PC-3 (cell line): ENCODE measurements at regions of chr3 and their contacts with region 1.

Region 1: DNA sequence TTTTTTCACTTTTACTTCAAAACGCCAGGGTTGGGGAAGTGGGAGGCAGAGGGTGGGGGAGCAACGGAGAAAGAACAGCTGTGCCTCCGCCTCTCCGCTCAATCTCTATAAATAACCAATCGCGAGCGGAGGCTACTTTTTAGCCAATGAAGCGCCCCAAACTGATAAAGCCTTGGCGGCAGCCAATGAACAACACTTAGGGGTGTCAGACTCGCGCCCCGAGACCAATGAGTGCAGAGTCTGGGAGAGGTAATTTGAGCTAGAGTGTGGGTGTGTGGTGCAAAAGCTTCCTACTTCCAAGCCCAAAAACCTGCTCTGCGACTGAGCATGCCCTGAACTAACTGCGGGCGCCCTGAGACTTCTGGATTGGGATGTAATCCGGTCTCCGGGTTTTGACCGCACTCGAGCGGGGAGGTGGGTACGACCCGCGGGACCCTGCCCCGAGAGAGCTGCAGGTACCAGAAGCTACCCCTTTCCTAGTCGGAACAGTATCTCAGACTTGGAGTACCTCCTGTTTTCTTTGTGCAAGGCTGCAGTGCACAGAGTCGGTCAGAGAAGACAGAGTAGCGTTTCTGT is 800 bp upstream of the RAP2B start:
- DNase-seq: peak; percentile 99
- ATAC-seq: peak; percentile 69
- H3K4me3 ChIP-seq: peak overlapping the region; percentile 95
- H3K27ac ChIP-seq: peak overlapping the region; percentile 94
- H3K4me1 ChIP-seq: peaks cover 31% of the 10 kb centered on the region
- H3K27me3 ChIP-seq: no peaks in the 10 kb centered on the region
- CTCF ChIP-seq: no peak

Region 2: GRCh38 chr3:153043729-153044328 is 117.4 kb before region 1 on chr3:
- CTCF ChIA-PET with region 1: interaction called, 34 read pairs
- POLR2A ChIA-PET with region 1: interaction called, 21 read pairs
- intact Hi-C with region 1: loop called (anchors 1 kb)
- DNase-seq: peak; percentile 60
- ATAC-seq: peak; percentile 30; the same call in 1 of the 2 replicates
- H3K4me3 ChIP-seq: peak overlapping the region; percentile 48
- H3K27ac ChIP-seq: peak overlapping the region; percentile 60
- H3K4me1 ChIP-seq: peaks cover 30% of the 10 kb centered on the region
- H3K27me3 ChIP-seq: no peaks in the 10 kb centered on the region
- CTCF ChIP-seq: no peak

Region 3: GRCh38 chr3:153111016-153111415 is 50.2 kb before region 1 on chr3:
- CTCF ChIA-PET with region 1: no interaction called
- POLR2A ChIA-PET with region 1: no interaction called
- intact Hi-C with region 1: no loop called
- DNase-seq: no peak
- ATAC-seq: no peak
- H3K4me3 ChIP-seq: no peak overlapping the region
- H3K27ac ChIP-seq: no peak overlapping the region
- H3K4me1 ChIP-seq: no peaks in the 10 kb centered on the region
- H3K27me3 ChIP-seq: no peaks in the 10 kb centered on the region
- CTCF ChIP-seq: no peak

Region 4: DNA sequence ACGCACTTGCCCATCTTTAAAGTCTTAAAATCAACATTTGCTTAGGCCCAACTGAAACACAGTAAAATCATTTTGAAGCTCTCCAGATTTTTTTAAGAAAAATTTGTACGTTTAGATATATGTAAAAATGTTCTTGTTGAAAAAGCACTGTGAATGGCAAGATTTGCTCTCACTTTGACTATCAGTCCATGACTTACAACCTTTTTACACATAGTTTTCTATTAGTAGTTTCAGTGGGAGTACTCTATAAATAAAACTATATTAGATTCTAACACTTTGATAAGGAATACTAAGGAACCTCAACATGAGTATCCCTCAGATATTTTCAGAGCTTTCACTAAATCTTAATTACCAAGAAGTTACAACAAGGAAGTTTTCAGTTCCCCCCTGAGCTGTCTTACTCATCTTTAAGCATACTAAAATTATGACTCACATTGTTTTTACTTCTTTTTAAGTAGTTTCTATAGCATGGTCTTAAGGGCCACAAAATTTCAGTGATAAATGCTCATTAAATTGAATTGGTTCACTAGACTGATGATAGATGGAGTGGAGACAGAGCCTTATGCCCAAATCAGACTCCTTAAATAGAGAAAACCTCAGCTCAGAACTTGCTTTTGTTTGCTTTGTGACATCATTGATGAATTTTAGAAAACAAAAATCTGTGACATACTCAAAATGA is 30.8 kb before region 1 on chr3:
- CTCF ChIA-PET with region 1: interaction called, 3 read pairs
- POLR2A ChIA-PET with region 1: interaction called, 13 read pairs
- intact Hi-C with region 1: loop called (anchors 5 kb)
- DNase-seq: peak; percentile 77
- ATAC-seq: peak; percentile 96
- H3K4me3 ChIP-seq: peak overlapping the region; percentile 13; the same call in 1 of the 2 replicates
- H3K27ac ChIP-seq: peak overlapping the region; percentile 68
- H3K4me1 ChIP-seq: peaks cover 18% of the 10 kb centered on the region
- H3K27me3 ChIP-seq: no peaks in the 10 kb centered on the region
- CTCF ChIP-seq: no peak

Region 5: DNA sequence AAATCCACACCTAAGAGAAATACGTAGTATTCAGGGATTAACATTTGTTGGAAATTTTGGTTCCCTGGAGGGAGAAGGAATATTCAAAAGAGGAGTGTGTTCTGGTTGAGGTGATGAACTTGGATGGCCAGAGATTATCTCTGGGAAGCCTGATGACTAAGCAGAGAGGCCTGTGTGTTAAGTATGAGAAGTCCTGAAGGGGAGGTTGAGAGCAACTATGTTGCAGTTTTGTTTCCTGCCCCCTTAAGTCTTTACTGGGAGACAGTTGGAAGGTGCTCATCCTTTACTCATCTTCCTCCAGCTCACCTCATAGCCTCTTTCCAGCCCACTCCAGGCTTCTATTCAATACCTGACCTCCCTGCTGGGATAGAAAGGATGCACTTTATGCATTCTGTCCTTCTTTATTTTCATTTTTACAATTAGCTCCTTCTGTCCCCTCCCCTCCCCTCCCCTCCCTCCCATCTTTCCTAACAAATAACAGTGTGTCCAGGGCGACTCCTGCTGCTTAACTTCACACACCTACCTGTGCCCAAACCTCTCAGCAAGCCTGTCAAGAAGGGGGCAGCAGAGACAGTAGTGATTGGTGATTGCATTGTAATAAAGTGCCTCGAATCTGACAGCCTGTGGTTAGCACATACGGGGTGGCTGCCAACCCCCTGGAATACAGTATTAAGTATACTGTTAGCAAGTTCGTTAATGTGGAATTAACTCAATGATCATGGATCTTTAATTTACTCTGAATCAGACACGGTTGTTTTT is 12.7 kb after region 1 on chr3:
- CTCF ChIA-PET with region 1: no interaction called
- POLR2A ChIA-PET with region 1: interaction called, 31 read pairs
- intact Hi-C with region 1: no loop called
- DNase-seq: peak; percentile 52
- ATAC-seq: peak; percentile 67
- H3K4me3 ChIP-seq: no peak overlapping the region
- H3K27ac ChIP-seq: no peak overlapping the region
- H3K4me1 ChIP-seq: peaks cover 11% of the 10 kb centered on the region; the same call in 1 of the 2 replicates
- H3K27me3 ChIP-seq: no peaks in the 10 kb centered on the region
- CTCF ChIP-seq: peak; percentile 58

Region 6: DNA sequence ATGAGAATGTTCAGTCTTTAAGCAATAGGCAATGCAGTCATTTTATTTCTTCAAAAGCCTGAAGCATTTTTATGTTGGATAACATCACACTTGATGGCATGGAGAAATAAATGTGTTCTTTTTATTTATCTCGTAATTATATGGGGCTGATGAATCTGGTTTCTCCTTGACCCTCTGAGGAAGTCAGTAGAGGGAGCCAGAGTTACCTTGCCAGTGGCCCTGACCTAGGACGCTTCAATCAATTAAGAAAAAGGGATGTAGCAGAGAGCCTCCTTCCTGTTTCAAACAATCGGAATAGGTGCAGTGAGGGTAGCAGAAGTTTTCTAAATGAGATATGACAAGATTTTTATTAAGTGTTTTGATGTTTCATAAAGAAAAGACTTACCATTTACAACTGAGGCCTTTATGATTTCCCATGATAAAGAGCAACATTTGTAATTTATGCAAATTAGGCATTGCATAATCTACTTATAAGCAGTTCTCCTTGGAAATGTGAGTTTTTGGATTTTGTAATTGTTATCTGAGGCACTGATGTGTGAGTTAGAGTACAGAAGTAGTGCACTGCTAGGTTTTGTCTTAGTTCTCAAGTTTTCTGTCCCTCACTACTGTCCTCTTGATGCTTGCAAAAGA is 129.9 kb after region 1 on chr3:
- CTCF ChIA-PET with region 1: interaction called, 18 read pairs
- POLR2A ChIA-PET with region 1: interaction called, 4 read pairs
- intact Hi-C with region 1: loop called (anchors 1 kb)
- DNase-seq: peak; percentile 69
- ATAC-seq: peak; percentile 80
- H3K4me3 ChIP-seq: no peak overlapping the region
- H3K27ac ChIP-seq: no peak overlapping the region
- H3K4me1 ChIP-seq: peaks cover 33% of the 10 kb centered on the region
- H3K27me3 ChIP-seq: no peaks in the 10 kb centered on the region
- CTCF ChIP-seq: peak; percentile 85

Region 7: GRCh38 chr3:153469162-153469561 is 307.9 kb after region 1 on chr3:
- CTCF ChIA-PET with region 1: no interaction called
- POLR2A ChIA-PET with region 1: no interaction called
- intact Hi-C with region 1: no loop called
- DNase-seq: peak; percentile 53
- ATAC-seq: no peak
- H3K4me3 ChIP-seq: no peak overlapping the region
- H3K27ac ChIP-seq: no peak overlapping the region
- H3K4me1 ChIP-seq: no peaks in the 10 kb centered on the region
- H3K27me3 ChIP-seq: no peaks in the 10 kb centered on the region
- CTCF ChIP-seq: no peak

Region 8: DNA sequence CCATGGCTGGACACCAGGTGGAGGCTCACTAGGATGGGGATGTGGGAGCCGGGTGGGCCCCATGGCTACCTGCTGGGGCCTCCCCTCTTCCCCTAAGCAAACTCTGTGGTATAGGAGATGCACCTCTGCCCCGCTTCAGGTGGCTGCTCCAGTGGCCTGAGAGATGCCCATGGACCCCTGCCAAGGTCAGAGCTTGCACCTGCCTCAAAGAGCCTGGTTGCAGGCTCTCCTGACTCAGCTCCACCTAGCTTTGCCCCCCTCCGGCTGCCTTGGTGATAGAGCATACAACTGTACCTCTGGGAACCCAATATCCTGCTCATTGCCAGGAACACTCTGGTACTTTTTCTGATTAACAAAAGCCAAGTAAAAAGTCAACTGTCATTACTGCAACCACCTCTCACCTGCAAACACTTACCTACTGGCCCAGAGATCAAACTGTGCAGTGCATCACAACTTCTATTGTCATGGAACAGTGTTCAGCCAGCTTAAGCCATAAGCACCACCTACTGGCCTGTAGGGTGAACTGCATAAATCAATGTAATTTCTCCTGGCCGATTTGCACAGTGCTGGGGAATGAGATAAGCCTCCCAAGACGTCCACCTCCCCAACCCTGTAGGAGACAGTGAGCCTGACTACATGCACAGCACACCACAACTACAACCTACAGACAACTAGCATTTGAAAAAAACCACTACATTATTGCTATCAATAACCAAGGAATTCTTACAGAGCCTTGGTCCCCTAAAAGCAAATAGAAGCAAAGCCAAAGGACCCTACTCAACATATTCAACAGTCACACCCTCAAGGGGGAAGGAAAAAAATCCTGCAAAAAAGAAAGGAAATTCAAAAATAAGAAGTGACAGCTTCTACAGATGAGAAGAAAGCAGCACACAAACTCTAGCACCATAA is 607.6 kb after region 1 on chr3:
- CTCF ChIA-PET with region 1: no interaction called
- POLR2A ChIA-PET with region 1: no interaction called
- intact Hi-C with region 1: loop called (anchors 2 kb)
- DNase-seq: peak; percentile 78
- ATAC-seq: peak; percentile 93
- H3K4me3 ChIP-seq: no peak overlapping the region
- H3K27ac ChIP-seq: no peak overlapping the region
- H3K4me1 ChIP-seq: 0 out of 2 replicates have a peak, but pooled peaks cover 4% of the 10 kb centered on the region
- H3K27me3 ChIP-seq: no peaks in the 10 kb centered on the region
- CTCF ChIP-seq: peak; percentile 96